Adrenal gland (tissue), 19 donors: ENCODE measurements at regions of chr1 and their contacts with region 1.

Region 1: DNA sequence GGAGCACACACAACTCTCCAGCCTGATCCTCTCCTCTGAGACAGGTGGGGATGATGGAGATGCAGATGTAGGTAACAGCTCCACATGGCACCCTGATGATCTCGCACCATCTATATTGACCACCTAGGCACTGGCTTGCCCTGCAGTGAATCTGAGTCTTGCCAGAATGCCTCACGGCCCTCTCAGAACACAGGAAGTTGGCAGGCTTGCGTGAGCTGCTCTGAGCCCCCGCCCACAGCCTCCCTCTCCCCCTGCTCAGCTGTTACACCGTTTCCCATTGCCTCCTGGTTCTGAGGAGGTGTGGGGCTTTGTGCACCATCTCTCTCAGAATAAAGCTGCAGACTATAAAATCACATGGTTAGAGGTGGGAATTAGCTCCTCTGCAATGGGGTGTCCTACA is 48.0 kb downstream of the URB2 start:
- DNase-seq: no peak
- H3K4me3 ChIP-seq: no peak overlapping the region
- H3K27ac ChIP-seq: no peak overlapping the region
- H3K4me1 ChIP-seq: no peaks in the 10 kb centered on the region
- H3K27me3 ChIP-seq: no peaks in the 10 kb centered on the region
- CTCF ChIP-seq: no peak
- POLR2A ChIP-seq: no peak

Region 2: GRCh38 chr1:229625915-229626831 is 47.9 kb before region 1 on chr1 and contains the starts of genes TAF5L and URB2:
- intact Hi-C with region 1: no loop called
- DNase-seq: peak; percentile 84 to 91 (median 88)
- H3K4me3 ChIP-seq: peak within 1 kb of the TSS; percentile 67 to 100 (median 94)
- H3K27ac ChIP-seq: peak within 1 kb of the TSS; percentile 44 to 98 (median 79)
- H3K4me1 ChIP-seq: peaks cover 13 to 39% of the 10 kb centered on the region in 2 donors
- H3K27me3 ChIP-seq: no peaks in the 10 kb centered on the region
- CTCF ChIP-seq: no peak
- POLR2A ChIP-seq: peak in 1 of 2 donors; percentile 63
- total RNA-seq, gene TAF5L: 7.8 to 16.0 (median 10.1) TPM
- total RNA-seq, gene URB2: 4.4 to 10.8 (median 7.8) TPM

Region 3: DNA sequence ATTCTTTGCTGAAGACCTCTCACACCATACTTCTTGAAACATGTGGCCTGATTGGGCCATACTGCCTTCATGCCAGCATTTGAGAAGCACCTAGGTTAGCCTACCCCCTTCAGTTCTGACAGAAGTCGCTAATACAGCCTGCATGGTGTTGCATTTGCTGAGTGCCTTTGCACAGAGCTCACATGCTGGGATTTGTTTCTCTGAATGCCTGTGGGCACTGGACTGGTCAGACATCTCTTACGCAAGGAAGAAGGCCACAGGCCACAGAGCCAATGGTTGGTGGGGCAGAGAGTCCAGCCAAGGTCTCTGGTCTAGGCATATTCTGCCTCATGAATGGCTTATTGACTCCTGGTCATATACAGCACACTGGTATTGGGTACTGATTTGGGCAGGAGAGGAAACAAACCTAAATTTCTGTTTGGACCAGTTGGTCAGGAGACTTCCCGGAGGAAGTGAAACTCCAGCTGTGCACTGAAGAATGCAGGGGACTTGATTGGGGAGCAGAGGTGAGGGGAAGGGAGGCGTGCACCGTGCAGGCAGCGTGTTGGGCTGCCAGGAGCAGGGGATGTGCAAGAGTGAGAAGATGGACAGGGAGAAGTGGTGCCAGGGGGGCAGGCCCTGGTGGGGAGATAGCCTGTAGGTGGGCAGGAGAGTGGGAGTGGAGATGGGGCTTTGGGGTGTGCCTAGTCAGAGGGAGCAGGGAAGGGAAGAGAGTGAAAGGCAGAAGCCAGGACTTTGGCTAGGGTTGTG is 29.9 kb before region 1 on chr1:
- intact Hi-C with region 1: no loop called
- DNase-seq: peak in 1 of 7 donors; percentile 20
- H3K4me3 ChIP-seq: no peak overlapping the region
- H3K27ac ChIP-seq: no peak overlapping the region
- H3K4me1 ChIP-seq: no peaks in the 10 kb centered on the region
- H3K27me3 ChIP-seq: no peaks in the 10 kb centered on the region
- CTCF ChIP-seq: no peak
- POLR2A ChIP-seq: no peak

Region 4: GRCh38 chr1:230049731-230050130 is 375.7 kb after region 1 on chr1:
- intact Hi-C with region 1: loop called in 1 of 2 experiments (anchors 10 kb)
- DNase-seq: no peak
- H3K4me3 ChIP-seq: no peak overlapping the region
- H3K27ac ChIP-seq: no peak overlapping the region
- H3K4me1 ChIP-seq: no peaks in the 10 kb centered on the region
- H3K27me3 ChIP-seq: no peaks in the 10 kb centered on the region
- CTCF ChIP-seq: no peak
- POLR2A ChIP-seq: no peak